ENCODE measurements at regions of chr2 and their contacts with region 1.

Region 1: GRCh38 chr2:195656859-195657633 is at the start of gene SLC39A10:
- DNase-seq: peak; percentile 98
- ATAC-seq: peak; percentile 95
- H3K4me3 ChIP-seq: peak within 1 kb of the TSS; percentile 96
- H3K27ac ChIP-seq: peak within 1 kb of the TSS; percentile 85
- H3K4me1 ChIP-seq: peaks cover 6% of the 10 kb centered on the region
- H3K27me3 ChIP-seq: no peaks in the 10 kb centered on the region
- CTCF ChIP-seq: peak; percentile 20
- POLR2A ChIP-seq: peak; percentile 96
- RAD21 ChIP-seq: no peak
- total RNA-seq, gene SLC39A10: 64.7 and 92.8 TPM in 2 replicates

Region 2: DNA sequence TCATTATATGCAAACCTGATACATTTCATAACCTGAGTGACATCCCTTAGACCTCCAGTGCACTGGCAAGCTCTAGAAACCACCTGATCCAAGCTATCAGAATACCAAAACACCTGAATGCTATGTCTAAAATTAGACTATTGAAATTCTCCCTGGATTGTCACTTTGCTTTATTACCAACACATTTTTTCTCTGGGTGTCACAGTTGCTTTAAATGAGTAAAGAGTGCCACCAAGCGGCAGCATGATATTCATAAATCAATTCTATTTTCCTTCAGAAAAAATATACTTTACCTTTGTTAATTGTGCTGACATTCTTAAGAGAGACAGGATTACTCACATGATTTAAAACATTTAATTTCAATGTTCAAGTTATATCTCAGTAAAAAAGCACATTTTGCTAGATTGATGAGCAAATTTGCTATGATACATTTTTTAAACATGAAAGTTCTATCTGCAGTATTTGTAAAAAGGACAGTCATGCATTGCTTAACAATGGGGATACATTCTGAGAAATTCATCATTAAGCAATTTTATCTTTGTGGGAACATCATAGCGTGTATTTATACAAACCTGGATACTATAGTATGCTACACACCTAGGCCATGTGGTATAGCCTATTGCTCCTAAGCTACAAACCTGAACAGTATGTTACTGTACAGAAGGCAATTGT is 338.5 kb before region 1 on chr2:
- CTCF ChIA-PET with region 1: interaction called, 8 read pairs
- POLR2A ChIA-PET with region 1: interaction called, 3 read pairs
- dilution Hi-C with region 1: no loop called
- in situ Hi-C with region 1: loop called (anchors 25 kb)
- intact Hi-C with region 1: loop called (anchors 1 kb)
- DNase-seq: peak; percentile 37
- ATAC-seq: peak; percentile 52
- H3K4me3 ChIP-seq: no peak overlapping the region
- H3K27ac ChIP-seq: no peak overlapping the region
- H3K4me1 ChIP-seq: peaks cover 4% of the 10 kb centered on the region
- H3K27me3 ChIP-seq: no peaks in the 10 kb centered on the region
- CTCF ChIP-seq: peak; percentile 74
- POLR2A ChIP-seq: no peak
- RAD21 ChIP-seq: peak; percentile 75

Region 3: DNA sequence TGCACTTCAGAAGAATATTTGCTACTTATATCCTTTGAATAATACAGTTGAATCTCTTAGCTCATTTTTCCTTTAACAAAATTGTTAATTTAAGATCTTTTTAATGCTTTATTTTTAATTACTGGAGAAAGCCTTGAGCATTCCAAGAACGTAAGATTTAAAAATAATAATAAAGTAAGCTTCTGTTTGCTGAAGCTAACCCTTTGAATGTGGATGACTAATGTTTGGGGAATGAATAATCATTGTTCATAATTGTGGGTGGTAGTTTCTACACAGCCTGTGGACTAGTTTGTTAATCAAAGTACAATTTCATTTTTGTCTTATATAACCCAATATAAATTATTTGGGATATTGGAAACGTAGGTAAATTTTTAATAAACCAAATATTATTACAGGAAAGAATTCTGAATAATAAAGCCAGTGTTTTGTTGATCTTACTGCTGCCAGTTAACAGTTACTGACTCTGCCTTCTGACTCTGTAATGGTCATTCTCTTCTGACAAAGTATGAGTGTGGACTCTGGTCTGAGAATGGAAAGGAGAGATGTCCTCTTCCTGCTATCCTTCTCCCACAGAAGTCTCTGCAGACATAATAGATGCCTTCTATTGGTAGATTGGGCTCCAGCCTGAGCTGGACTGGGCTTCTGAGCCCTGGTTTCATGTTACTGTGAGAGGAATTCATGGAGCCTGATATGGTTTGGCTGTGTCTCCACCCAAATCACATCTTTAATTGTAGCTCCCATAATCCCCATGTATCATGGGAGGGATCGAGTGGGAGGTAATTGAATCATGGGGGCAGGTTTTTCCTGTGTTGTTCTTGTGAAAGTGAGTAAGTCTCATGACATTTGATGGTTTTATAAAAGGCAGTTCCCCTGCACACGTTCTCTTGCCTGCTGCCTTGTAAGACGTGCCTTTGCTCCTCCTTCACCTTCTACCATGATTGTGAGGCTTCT is 292.8 kb before region 1 on chr2:
- CTCF ChIA-PET with region 1: interaction called, 3 read pairs
- POLR2A ChIA-PET with region 1: no interaction called
- dilution Hi-C with region 1: no loop called
- in situ Hi-C with region 1: no loop called
- intact Hi-C with region 1: loop called (anchors 5 kb)
- DNase-seq: peak; percentile 71
- ATAC-seq: peak; percentile 79
- H3K4me3 ChIP-seq: no peak overlapping the region
- H3K27ac ChIP-seq: no peak overlapping the region
- H3K4me1 ChIP-seq: peaks cover 6% of the 10 kb centered on the region; the same call in 1 of the 2 replicates
- H3K27me3 ChIP-seq: no peaks in the 10 kb centered on the region
- CTCF ChIP-seq: no peak
- POLR2A ChIP-seq: no peak
- RAD21 ChIP-seq: no peak

Region 4: GRCh38 chr2:195477248-195477995 is 179.6 kb before region 1 on chr2:
- CTCF ChIA-PET with region 1: no interaction called
- POLR2A ChIA-PET with region 1: no interaction called
- dilution Hi-C with region 1: no loop called
- in situ Hi-C with region 1: no loop called
- intact Hi-C with region 1: loop called (anchors 5 kb)
- DNase-seq: peak; percentile 87
- ATAC-seq: peak; percentile 96
- H3K4me3 ChIP-seq: no peak overlapping the region
- H3K27ac ChIP-seq: no peak overlapping the region
- H3K4me1 ChIP-seq: peaks cover 2% of the 10 kb centered on the region; the same call in 1 of the 2 replicates
- H3K27me3 ChIP-seq: no peaks in the 10 kb centered on the region
- CTCF ChIP-seq: no peak
- POLR2A ChIP-seq: no peak
- RAD21 ChIP-seq: no peak

Region 5: DNA sequence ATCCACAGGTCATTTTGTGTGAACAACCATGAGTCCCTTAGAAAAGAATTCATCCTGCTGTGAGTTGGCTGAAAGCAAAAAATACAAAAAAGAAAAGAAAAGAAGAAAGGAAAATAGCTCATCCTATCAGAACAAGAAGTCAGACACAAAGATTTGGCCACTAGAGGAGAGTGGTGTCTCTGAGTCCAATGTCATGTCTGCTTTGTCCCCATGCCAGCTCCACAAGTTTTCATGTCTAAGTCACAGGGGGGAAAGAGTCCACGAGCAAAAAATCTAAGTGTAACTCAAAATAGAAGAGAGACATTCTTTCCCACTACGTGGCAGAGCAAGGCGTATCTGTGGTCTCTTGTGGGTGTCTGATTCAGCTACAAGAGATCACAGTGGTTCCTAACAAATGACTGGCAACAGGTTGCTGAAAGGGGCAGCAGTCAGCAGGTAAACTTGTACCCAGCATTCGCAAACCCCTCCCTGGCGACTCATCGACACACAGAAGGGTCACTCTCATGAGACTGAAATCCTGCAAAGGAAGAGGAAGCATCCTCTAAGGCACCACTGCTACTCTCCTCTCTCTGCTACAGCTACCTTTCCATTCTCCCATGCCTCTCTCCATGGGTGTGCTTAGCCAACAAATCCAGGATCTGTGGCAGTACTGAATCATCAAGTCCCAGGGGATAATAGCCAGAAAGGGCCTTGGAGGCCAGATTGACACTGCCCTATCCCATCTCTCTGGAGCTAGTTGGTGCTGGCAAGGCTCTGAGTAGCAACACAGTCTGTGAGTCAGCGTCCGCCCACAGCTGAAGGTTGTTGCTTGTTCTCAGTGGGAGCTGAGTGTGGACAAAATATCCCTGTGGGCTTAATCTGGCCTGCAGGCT is 123.0 kb before region 1 on chr2:
- CTCF ChIA-PET with region 1: interaction called, 8 read pairs
- POLR2A ChIA-PET with region 1: interaction called, 5 read pairs
- dilution Hi-C with region 1: no loop called
- in situ Hi-C with region 1: loop called (anchors 10 kb)
- intact Hi-C with region 1: loop called (anchors 2 kb)
- DNase-seq: peak; percentile 94
- ATAC-seq: peak; percentile 84
- H3K4me3 ChIP-seq: no peak overlapping the region
- H3K27ac ChIP-seq: peak overlapping the region; percentile 65
- H3K4me1 ChIP-seq: peaks cover 11% of the 10 kb centered on the region
- H3K27me3 ChIP-seq: no peaks in the 10 kb centered on the region
- CTCF ChIP-seq: peak; percentile 37
- POLR2A ChIP-seq: no peak
- RAD21 ChIP-seq: peak; percentile 27; the same call in 1 of the 2 replicates

Region 6: GRCh38 chr2:195612611-195613495 is 44.2 kb before region 1 on chr2:
- CTCF ChIA-PET with region 1: no interaction called
- POLR2A ChIA-PET with region 1: no interaction called
- dilution Hi-C with region 1: no loop called
- in situ Hi-C with region 1: no loop called
- intact Hi-C with region 1: loop called (anchors 2 kb)
- DNase-seq: peak; percentile 82
- ATAC-seq: peak; percentile 90
- H3K4me3 ChIP-seq: peak overlapping the region; percentile 49; the same call in 1 of the 2 replicates
- H3K27ac ChIP-seq: peak overlapping the region; percentile 89
- H3K4me1 ChIP-seq: peaks cover 11% of the 10 kb centered on the region
- H3K27me3 ChIP-seq: no peaks in the 10 kb centered on the region
- CTCF ChIP-seq: no peak
- POLR2A ChIP-seq: peak; percentile 67; the same call in 1 of the 2 replicates
- RAD21 ChIP-seq: peak; percentile 10; the same call in 1 of the 2 replicates

Region 7: GRCh38 chr2:196277002-196277401 is 620.0 kb after region 1 on chr2:
- CTCF ChIA-PET with region 1: no interaction called
- POLR2A ChIA-PET with region 1: no interaction called
- dilution Hi-C with region 1: no loop called
- in situ Hi-C with region 1: no loop called
- intact Hi-C with region 1: no loop called
- DNase-seq: peak; percentile 64
- ATAC-seq: no peak
- H3K4me3 ChIP-seq: no peak overlapping the region
- H3K27ac ChIP-seq: no peak overlapping the region
- H3K4me1 ChIP-seq: peaks cover 21% of the 10 kb centered on the region
- H3K27me3 ChIP-seq: no peaks in the 10 kb centered on the region
- CTCF ChIP-seq: peak; percentile 69
- POLR2A ChIP-seq: no peak
- RAD21 ChIP-seq: peak; percentile 68

Region 8: DNA sequence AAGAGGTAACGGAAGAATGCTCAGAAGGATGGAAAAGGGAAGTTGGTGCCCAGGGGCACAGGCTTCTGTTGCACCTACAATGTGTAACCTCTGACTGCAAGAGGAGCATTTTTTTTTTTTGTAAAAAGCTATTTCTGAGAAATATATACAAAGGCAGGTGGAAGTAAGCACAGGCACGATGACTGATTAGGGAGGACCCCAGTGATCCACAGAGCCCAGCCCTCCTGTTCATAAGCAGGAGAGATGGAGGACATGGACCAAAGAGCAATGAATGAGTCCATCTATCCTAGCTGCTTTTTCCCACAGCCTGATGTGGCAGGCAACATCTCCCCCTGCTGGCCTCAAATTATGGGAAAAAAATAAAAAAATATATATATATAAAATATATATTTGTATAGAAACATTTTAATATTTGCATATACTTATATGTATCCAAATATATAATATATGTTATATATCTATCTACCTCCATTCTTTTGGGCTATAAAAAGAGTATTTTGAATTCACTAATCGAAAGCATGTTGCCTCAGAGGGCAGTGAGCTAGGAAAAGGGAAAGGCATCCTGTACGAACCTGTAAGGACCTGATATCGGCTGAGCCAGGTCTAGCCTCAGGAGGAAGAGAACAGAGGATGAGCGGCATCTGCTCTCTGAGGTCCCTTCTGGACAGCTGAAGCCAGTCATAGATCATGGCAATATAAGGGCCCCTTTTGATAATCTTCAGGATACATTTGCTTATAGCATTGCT is 680.3 kb after region 1 on chr2:
- CTCF ChIA-PET with region 1: no interaction called
- POLR2A ChIA-PET with region 1: no interaction called
- dilution Hi-C with region 1: no loop called
- in situ Hi-C with region 1: loop called (anchors 25 kb)
- intact Hi-C with region 1: no loop called
- DNase-seq: peak; percentile 58
- ATAC-seq: peak; percentile 25; the same call in 1 of the 2 replicates
- H3K4me3 ChIP-seq: no peak overlapping the region
- H3K27ac ChIP-seq: no peak overlapping the region
- H3K4me1 ChIP-seq: peaks cover 18% of the 10 kb centered on the region
- H3K27me3 ChIP-seq: no peaks in the 10 kb centered on the region
- CTCF ChIP-seq: peak; percentile 56
- POLR2A ChIP-seq: no peak
- RAD21 ChIP-seq: peak; percentile 83